Activated naive CD8-positive, alpha-beta T cell treated with anti-CD3 and anti-CD28 coated beads, Interleukin-2, amount 10 ng/mL, durations not matched to agents 7 days and 5 days (primary cell): ENCODE measurements at regions of chr22 and their contacts with region 1.

Region 1: GRCh38 chr22:36331306-36331911 is 56.4 kb downstream of the MYH9 start:
- DNase-seq: peak; percentile 73
- ATAC-seq: peak; percentile 60
- H3K4me3 Mint-ChIP-seq: peak overlapping the region; percentile 90
- H3K27ac Mint-ChIP-seq: peak overlapping the region; percentile 98
- H3K4me1 Mint-ChIP-seq: peaks cover 88% of the 10 kb centered on the region
- H3K27me3 Mint-ChIP-seq: no peaks in the 10 kb centered on the region

Region 2: DNA sequence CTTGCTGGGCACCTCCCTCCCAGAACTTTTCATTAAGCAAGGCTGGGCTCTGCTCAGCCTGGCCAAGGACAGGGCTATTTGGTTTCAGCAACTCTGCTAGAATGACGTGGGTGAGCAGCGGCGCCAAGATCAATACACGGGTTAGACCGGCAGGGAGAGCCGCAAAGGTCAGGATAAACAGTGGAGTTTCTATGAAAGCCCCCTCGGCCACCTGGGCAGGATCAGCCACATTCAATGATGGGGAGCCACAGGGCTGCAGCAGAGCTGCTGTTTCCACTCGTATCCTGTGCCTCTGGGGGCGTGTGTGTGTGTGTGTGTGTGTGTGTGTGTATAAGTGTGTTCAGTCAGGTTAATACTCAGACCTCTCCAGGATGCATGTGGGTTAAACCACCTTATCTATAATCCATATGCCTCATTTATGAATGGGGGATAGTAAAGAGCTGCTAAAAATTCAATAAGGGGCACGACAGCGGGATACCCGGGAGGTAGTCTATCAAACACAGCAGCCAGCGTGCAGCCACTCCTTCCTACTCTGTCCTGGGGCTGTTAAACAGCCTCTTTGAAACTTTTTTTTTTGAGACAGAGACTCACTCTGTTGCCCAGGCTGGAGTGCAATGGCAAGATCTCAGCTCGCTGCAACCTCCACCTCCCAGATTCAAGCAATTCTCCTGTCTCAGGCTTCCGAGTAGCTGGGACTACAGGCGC is 21.5 kb after region 1 on chr22:
- POLR2A ChIA-PET with region 1: interaction called, 30 read pairs
- DNase-seq: peak; percentile 66
- ATAC-seq: peak; percentile 64
- H3K4me3 Mint-ChIP-seq: peak overlapping the region; percentile 64
- H3K27ac Mint-ChIP-seq: peak overlapping the region; percentile 89
- H3K4me1 Mint-ChIP-seq: peaks cover 80% of the 10 kb centered on the region
- H3K27me3 Mint-ChIP-seq: no peaks in the 10 kb centered on the region

Region 3: GRCh38 chr22:36365020-36365411 is 33.6 kb after region 1 on chr22:
- POLR2A ChIA-PET with region 1: interaction called, 21 read pairs
- DNase-seq: peak; percentile 74
- ATAC-seq: peak; percentile 86
- H3K4me3 Mint-ChIP-seq: peak overlapping the region; percentile 74
- H3K27ac Mint-ChIP-seq: peak overlapping the region; percentile 88
- H3K4me1 Mint-ChIP-seq: peaks cover 83% of the 10 kb centered on the region
- H3K27me3 Mint-ChIP-seq: no peaks in the 10 kb centered on the region

Region 4: DNA sequence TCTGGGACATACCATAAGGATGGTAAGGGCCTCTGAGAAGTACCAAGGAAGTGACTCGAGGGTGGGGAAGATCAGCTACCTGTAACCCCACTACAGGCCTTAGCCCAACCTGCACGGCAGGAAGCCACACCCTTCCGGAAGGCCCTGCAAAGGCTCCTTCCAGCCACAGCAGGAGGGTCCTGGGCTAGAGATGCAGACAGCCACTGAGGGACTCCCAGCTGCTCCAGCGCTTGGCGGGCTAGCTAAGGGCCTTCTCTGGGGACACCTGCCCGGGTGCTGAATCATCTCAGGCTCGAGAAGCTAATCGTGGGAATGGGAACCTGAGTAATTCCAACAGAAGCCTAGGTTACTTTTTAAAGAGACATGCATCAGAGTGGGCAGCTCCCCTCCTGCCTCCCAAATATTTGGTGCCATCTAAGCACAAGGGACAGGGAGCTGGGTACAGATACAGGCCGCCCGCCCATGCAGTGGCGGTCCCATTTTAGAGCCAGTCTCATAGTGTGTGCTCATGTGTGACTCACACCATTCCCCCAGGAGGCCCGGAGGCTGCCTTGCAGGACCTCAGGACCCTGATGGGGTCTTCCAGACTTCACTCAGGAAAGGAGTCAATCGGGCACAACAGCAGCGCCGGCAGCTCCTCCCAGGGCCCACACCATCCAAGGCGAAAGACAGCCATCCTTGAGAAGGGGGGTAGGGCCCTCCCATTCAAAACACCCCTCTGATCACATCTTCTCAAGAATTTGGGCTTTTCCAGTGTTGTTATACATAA is 48.4 kb after region 1 on chr22:
- POLR2A ChIA-PET with region 1: interaction called, 62 read pairs
- DNase-seq: peak; percentile 59
- ATAC-seq: peak; percentile 62
- H3K4me3 Mint-ChIP-seq: peak overlapping the region; percentile 78
- H3K27ac Mint-ChIP-seq: peak overlapping the region; percentile 97
- H3K4me1 Mint-ChIP-seq: peaks cover 83% of the 10 kb centered on the region
- H3K27me3 Mint-ChIP-seq: no peaks in the 10 kb centered on the region

Region 5: DNA sequence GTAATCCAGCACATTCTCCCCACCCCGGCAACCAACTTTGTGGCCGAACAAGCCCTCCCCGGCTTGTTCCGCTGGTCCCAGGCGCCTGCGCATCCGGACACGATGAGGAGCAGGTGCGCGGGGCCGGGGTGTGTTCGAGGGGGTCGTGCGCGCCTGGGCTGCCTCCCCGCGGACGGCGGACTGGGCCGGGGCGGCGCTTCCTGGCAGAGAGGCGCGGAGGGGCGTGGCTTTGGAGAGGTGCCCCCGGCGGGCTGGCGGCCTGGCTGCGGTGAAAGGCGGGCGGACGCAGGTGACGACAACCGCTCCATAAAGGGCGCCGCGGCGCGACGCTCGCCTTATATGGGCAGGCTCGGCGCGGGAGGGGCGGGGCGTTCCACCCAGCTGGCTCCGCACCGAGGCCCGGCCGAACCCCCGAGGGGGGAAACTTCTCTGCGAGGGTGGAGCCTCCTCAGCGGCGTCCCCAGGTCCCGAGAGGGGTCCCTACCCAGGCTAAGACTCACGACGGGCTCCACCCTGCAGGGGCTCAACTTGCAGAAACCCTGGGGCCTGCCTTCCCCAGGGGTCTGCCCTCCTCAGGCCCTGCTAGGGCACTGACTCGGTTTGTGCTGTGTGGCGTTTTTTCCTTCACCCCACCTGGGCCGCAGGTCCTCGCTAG is 123.6 kb after region 1 on chr22:
- POLR2A ChIA-PET with region 1: interaction called, 13 read pairs
- DNase-seq: peak; percentile 98
- ATAC-seq: peak; percentile 73
- H3K4me3 Mint-ChIP-seq: peak overlapping the region; percentile 56
- H3K27ac Mint-ChIP-seq: peak overlapping the region; percentile 83
- H3K4me1 Mint-ChIP-seq: peaks cover 49% of the 10 kb centered on the region
- H3K27me3 Mint-ChIP-seq: no peaks in the 10 kb centered on the region